Caco-2 (cell line): ENCODE measurements at regions of chr2 and their contacts with region 1.

Region 1: GRCh38 chr2:70301344-70302194 is at the start of gene FAM136A:
- DNase-seq: peak; percentile 91 to 98
- H3K4me3 ChIP-seq: peak within 1 kb of the TSS; percentile 99
- H3K4me3 Mint-ChIP-seq: peak within 1 kb of the TSS; percentile 96
- H3K27ac Mint-ChIP-seq: peak within 1 kb of the TSS; percentile 95
- H3K4me1 ChIP-seq: peaks cover 5% of the 10 kb centered on the region
- H3K4me1 Mint-ChIP-seq: no peaks in the 10 kb centered on the region
- H3K27me3 ChIP-seq: no peaks in the 10 kb centered on the region
- H3K27me3 Mint-ChIP-seq: no peaks in the 10 kb centered on the region
- CTCF ChIP-seq: peak; percentile 94 to 95
- total RNA-seq, gene FAM136A: 115 and 120 TPM in 2 replicates

Region 2: DNA sequence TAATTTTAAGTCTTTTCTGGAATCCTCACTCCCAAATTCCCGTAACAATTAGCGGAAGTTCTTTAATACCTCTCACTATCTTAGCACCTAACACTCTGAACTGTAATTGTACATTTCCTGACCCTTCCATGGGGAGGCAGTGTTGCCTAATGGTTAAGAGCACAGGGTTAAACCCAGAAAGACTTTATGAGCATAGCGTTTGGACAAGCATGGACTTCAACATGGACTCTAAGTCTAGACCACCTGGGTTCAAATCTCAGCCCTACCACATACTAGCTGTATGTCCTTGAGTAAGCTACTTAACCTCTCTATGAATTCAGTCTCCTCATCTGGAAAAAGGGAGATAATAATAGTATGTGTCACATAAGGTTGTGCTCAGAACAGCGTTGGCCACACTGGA is 1275.5 kb before region 1 on chr2:
- CTCF ChIA-PET with region 1: no interaction called
- POLR2A ChIA-PET with region 1: no interaction called
- intact Hi-C with region 1: no loop called
- DNase-seq: peak in 1 of 2 experiments; percentile 69
- H3K4me3 ChIP-seq: no peak overlapping the region
- H3K4me3 Mint-ChIP-seq: no peak overlapping the region
- H3K27ac Mint-ChIP-seq: no peak overlapping the region
- H3K4me1 ChIP-seq: no peaks in the 10 kb centered on the region
- H3K4me1 Mint-ChIP-seq: no peaks in the 10 kb centered on the region
- H3K27me3 ChIP-seq: no peaks in the 10 kb centered on the region
- H3K27me3 Mint-ChIP-seq: no peaks in the 10 kb centered on the region
- CTCF ChIP-seq: peak; percentile 58 to 62

Region 3: DNA sequence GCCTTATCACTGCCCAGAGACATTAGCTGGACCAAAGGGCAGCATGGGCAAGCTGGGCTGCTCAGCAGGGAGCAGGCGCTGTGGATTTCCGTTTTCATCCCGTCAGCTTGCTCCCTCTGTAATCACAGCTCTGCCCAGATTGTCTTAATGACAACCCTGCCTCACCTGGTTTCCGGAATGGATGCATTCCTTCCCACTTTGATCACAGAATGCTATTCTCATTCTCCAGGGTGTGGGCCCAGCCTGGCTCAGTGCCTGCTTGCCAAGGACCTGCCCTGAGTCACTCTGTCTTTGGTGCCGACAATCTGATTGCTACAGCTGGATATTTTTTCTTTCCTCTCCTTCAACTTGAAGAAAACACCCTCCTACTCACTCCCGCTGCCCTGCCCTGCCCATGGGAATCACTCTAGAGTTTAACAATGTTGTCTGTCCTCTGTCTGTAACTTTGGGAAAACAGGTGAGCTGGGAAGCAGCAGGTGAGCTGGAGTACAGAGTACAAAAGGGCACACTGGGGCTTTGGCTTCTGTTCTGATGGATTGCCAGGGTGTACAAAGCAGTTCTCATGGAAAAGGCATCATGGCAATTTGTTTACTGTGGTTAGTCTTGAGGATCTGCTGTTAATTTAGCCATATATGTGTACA is 27.5 kb after region 1 on chr2:
- CTCF ChIA-PET with region 1: interaction called, 16 read pairs
- POLR2A ChIA-PET with region 1: no interaction called
- intact Hi-C with region 1: no loop called
- DNase-seq: peak; percentile 29 to 53
- H3K4me3 ChIP-seq: no peak overlapping the region
- H3K4me3 Mint-ChIP-seq: peak overlapping the region; percentile 13
- H3K27ac Mint-ChIP-seq: no peak overlapping the region
- H3K4me1 ChIP-seq: no peaks in the 10 kb centered on the region
- H3K4me1 Mint-ChIP-seq: peaks cover 7% of the 10 kb centered on the region
- H3K27me3 ChIP-seq: no peaks in the 10 kb centered on the region
- H3K27me3 Mint-ChIP-seq: no peaks in the 10 kb centered on the region
- CTCF ChIP-seq: no peak

Region 4: DNA sequence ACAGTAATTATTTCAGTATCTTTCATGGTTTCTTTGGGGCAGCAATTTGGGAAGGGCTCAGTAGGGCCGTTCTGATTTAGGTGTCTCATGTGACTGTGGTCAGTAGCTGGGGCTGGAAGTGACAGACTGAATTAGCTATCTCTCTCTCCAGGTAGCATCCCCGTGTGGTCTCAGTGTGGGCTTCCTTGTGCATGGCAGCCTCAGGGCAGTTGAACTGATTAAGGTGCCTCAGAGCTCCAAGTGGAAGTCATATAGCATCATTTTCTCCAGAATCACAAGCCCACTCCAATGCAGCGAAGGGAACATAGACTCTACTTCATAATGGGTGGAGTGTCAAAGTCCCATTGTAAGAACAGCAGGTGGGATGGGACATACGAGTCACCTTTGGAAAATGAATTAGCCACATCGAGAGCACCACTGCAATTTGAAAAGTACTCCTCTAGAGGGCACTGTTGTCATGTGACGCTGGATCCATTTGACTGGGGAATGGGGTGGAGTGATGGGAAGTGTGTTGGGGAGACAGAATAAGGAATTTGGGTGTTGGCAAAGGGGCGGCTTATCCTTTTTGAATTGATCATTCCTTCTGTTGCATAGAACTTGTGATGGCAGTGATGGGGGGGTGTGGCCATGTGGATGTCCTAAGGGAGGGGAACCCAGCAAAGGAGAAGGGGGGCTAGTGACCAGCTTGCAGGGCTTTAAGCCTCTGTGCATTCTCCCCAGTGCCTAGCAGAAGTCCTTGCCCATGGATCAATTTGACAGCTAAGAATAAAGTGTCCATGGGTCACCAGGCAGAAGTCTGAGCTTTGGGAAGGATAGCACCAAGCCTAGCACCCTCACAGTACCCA is 39.6 kb after region 1 on chr2:
- CTCF ChIA-PET with region 1: interaction called, 18 read pairs
- POLR2A ChIA-PET with region 1: no interaction called
- intact Hi-C with region 1: loop called (anchors 1 kb)
- DNase-seq: peak; percentile 58 to 70
- H3K4me3 ChIP-seq: no peak overlapping the region
- H3K4me3 Mint-ChIP-seq: no peak overlapping the region
- H3K27ac Mint-ChIP-seq: no peak overlapping the region
- H3K4me1 ChIP-seq: no peaks in the 10 kb centered on the region
- H3K4me1 Mint-ChIP-seq: no peaks in the 10 kb centered on the region
- H3K27me3 ChIP-seq: peaks cover 2% of the 10 kb centered on the region; the same call in 1 of the 2 replicates
- H3K27me3 Mint-ChIP-seq: peaks cover 16% of the 10 kb centered on the region
- CTCF ChIP-seq: peak; percentile 83 to 84

Region 5: DNA sequence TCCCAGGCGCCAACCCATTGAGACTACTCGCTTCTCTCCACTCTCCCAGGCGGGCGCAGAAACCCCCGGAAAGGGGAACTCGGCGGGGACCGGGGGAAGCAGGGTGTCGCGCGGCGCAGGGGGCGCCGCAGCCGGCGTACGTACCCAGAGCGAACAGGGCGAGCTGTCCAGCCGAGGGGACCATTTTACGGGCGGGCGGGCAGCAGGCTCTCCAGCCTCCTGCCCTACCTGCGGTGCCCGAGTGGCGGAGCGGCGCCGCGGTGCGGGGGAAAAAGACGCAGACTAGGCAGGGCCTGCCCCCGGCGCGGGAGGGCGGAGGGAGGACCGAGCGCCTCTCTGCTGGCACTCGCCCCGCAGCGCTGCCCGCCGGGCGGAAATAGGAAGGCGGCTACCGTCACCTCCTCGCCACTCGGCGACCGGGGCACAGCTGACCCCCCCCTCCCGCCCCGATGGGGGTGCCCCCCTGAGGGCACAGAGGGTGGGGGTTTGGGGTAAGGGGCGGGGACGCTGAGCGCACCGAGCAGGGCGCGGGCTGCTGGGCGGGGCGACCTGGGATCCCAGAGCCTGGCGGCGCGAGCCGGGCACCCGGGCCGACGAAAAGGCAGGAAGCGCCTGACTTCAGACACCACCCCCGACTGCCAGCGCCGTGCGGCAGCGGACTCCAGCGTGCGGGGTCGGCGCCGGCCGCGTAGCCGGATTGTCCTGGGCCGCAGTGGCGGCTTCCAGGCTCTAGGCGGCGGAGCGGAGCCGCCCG is 252.2 kb after region 1 on chr2 and contains the start of gene TGFA:
- CTCF ChIA-PET with region 1: interaction called, 5 read pairs
- POLR2A ChIA-PET with region 1: no interaction called
- intact Hi-C with region 1: loop called (anchors 5 kb)
- DNase-seq: peak; percentile 69 to 77
- H3K4me3 ChIP-seq: peak within 1 kb of the TSS; percentile 44
- H3K4me3 Mint-ChIP-seq: peak within 1 kb of the TSS; percentile 87
- H3K27ac Mint-ChIP-seq: peak within 1 kb of the TSS; percentile 73
- H3K4me1 ChIP-seq: peaks cover 19% of the 10 kb centered on the region
- H3K4me1 Mint-ChIP-seq: peaks cover 11% of the 10 kb centered on the region
- H3K27me3 ChIP-seq: peaks cover 7% of the 10 kb centered on the region
- H3K27me3 Mint-ChIP-seq: peaks cover 28% of the 10 kb centered on the region
- CTCF ChIP-seq: peak in 1 of 2 experiments; percentile 76
- total RNA-seq, gene TGFA: 0.32 and 0.70 TPM in 2 replicates

Region 6: DNA sequence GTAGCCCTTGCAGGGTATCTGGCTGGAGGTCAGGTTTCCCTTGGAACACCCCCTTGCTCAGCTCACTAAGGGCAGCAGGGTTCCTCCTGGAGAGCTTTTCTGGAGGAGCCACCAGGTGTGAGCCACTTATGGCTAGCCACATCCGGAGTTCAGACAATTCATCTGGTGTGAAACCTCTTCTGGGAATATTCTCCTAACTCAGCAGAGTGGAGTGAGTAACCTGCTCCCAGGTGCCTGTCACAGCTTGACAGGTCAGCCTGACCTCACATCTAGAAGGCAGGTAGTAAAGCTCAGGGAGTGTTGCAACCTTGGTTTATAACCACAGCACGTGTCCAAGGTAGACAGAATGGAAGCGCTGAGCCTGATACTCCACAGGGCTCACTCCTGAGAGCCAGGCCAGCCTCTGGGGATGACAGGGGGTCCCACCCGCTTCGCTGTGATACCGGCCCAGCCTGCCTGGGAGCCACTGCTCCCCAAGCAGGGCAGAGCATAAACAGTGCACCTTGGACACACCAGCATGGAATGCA is 314.7 kb after region 1 on chr2:
- CTCF ChIA-PET with region 1: interaction called, 67 read pairs
- POLR2A ChIA-PET with region 1: no interaction called
- intact Hi-C with region 1: loop called (anchors 1 kb)
- DNase-seq: peak; percentile 12 to 43
- H3K4me3 ChIP-seq: no peak overlapping the region
- H3K4me3 Mint-ChIP-seq: no peak overlapping the region
- H3K27ac Mint-ChIP-seq: no peak overlapping the region
- H3K4me1 ChIP-seq: no peaks in the 10 kb centered on the region
- H3K4me1 Mint-ChIP-seq: no peaks in the 10 kb centered on the region
- H3K27me3 ChIP-seq: no peaks in the 10 kb centered on the region; the same call in 1 of the 2 replicates
- H3K27me3 Mint-ChIP-seq: peaks cover 19% of the 10 kb centered on the region
- CTCF ChIP-seq: no peak

Region 7: GRCh38 chr2:70647873-70648481 is 346.4 kb after region 1 on chr2:
- CTCF ChIA-PET with region 1: interaction called, 38 read pairs
- POLR2A ChIA-PET with region 1: interaction called, 3 read pairs
- intact Hi-C with region 1: loop called (anchors 1 kb)
- DNase-seq: peak; percentile 72 to 83
- H3K4me3 ChIP-seq: no peak overlapping the region
- H3K4me3 Mint-ChIP-seq: no peak overlapping the region
- H3K27ac Mint-ChIP-seq: no peak overlapping the region
- H3K4me1 ChIP-seq: no peaks in the 10 kb centered on the region
- H3K4me1 Mint-ChIP-seq: no peaks in the 10 kb centered on the region
- H3K27me3 ChIP-seq: no peaks in the 10 kb centered on the region
- H3K27me3 Mint-ChIP-seq: peaks cover 12% of the 10 kb centered on the region
- CTCF ChIP-seq: peak; percentile 95 to 98

Region 8: GRCh38 chr2:70789304-70790135 is 488.0 kb after region 1 on chr2:
- CTCF ChIA-PET with region 1: interaction called, 3 read pairs
- POLR2A ChIA-PET with region 1: no interaction called
- intact Hi-C with region 1: loop called (anchors 5 kb)
- DNase-seq: peak; percentile 63 to 64
- H3K4me3 ChIP-seq: no peak overlapping the region
- H3K4me3 Mint-ChIP-seq: no peak overlapping the region
- H3K27ac Mint-ChIP-seq: no peak overlapping the region
- H3K4me1 ChIP-seq: no peaks in the 10 kb centered on the region
- H3K4me1 Mint-ChIP-seq: no peaks in the 10 kb centered on the region
- H3K27me3 ChIP-seq: 0 out of 2 replicates have a peak, but pooled peaks cover 1% of the 10 kb centered on the region
- H3K27me3 Mint-ChIP-seq: peaks cover 27% of the 10 kb centered on the region
- CTCF ChIP-seq: peak; percentile 71 to 72